PC-3 (cell line): ENCODE measurements at regions of chrX and their contacts with region 1.

Region 1: GRCh38 chrX:45769761-45770582 is 569.3 kb upstream of the DIPK2B start:
- DNase-seq: peak; percentile 78
- ATAC-seq: peak; percentile 48
- H3K4me3 ChIP-seq: peak overlapping the region; percentile 87
- H3K27ac ChIP-seq: peak overlapping the region; percentile 98
- H3K4me1 ChIP-seq: peaks cover 45% of the 10 kb centered on the region
- H3K27me3 ChIP-seq: no peaks in the 10 kb centered on the region
- CTCF ChIP-seq: no peak

Region 2: GRCh38 chrX:45758319-45758718 is 11.7 kb before region 1 on chrX:
- CTCF ChIA-PET with region 1: no interaction called
- POLR2A ChIA-PET with region 1: interaction called, 7 read pairs
- intact Hi-C with region 1: loop called (anchors 1 kb)
- DNase-seq: peak; percentile 83
- ATAC-seq: peak; percentile 25
- H3K4me3 ChIP-seq: peak overlapping the region; percentile 20; the same call in 1 of the 2 replicates
- H3K27ac ChIP-seq: peak overlapping the region; percentile 92
- H3K4me1 ChIP-seq: peaks cover 92% of the 10 kb centered on the region
- H3K27me3 ChIP-seq: no peaks in the 10 kb centered on the region
- CTCF ChIP-seq: no peak

Region 3: DNA sequence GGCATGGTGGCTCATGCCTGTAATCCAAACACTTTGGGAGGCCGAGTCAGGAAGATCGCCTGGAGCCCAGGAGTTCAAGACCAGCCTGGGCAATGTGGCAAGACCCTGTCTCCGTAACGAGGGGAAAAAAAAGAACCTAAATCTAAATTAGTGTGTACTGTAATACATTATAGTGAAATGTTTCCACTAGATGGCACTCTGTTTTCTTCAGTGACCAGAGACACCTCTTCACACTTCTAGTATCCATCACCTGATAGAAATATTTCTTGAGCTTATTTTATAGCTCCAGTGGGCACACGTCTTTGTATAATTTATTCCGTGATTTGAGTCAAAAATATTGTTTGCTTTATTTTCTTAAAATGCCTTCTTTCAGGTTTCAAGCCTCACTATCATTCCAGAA is 31.6 kb after region 1 on chrX:
- CTCF ChIA-PET with region 1: interaction called, 4 read pairs
- POLR2A ChIA-PET with region 1: interaction called, 10 read pairs
- intact Hi-C with region 1: loop called (anchors 1 kb)
- DNase-seq: peak; percentile 71
- ATAC-seq: peak; percentile 52
- H3K4me3 ChIP-seq: peak overlapping the region; percentile 58
- H3K27ac ChIP-seq: peak overlapping the region; percentile 98
- H3K4me1 ChIP-seq: peaks cover 65% of the 10 kb centered on the region
- H3K27me3 ChIP-seq: no peaks in the 10 kb centered on the region
- CTCF ChIP-seq: peak; percentile 59

Region 4: DNA sequence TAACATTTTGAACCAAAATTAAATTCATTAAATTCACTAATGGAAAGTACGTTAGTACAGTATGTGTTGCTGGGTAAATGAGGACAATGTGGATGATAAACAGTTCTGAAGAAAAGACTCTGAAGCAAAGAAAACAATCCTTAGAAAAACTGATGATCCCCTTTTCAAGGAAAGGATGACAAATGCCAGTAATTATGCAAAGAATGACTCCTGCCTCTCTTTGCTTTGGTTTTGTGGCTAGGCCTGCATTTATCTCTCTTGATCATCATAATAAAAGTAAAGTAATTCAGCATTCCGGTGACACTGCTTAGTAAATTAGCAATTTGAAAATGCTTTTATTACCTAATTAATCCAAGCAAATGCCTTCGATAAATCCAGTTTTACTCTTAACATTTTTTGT is 82.9 kb after region 1 on chrX:
- CTCF ChIA-PET with region 1: no interaction called
- POLR2A ChIA-PET with region 1: no interaction called
- intact Hi-C with region 1: no loop called
- DNase-seq: peak; percentile 54
- ATAC-seq: no peak
- H3K4me3 ChIP-seq: peak overlapping the region; percentile 79; the same call in 1 of the 2 replicates
- H3K27ac ChIP-seq: peak overlapping the region; percentile 83
- H3K4me1 ChIP-seq: peaks cover 23% of the 10 kb centered on the region
- H3K27me3 ChIP-seq: no peaks in the 10 kb centered on the region
- CTCF ChIP-seq: no peak